PC-9 (cell line): ENCODE measurements at regions of chr19 and their contacts with region 1.

Region 1: GRCh38 chr19:34128558-34129250 is 43.6 kb upstream of the LSM14A start:
- DNase-seq: no peak
- H3K4me3 ChIP-seq: no peak overlapping the region
- H3K27ac ChIP-seq: no peak overlapping the region
- H3K4me1 ChIP-seq: peaks cover 1% of the 10 kb centered on the region; the same call in 1 of the 2 replicates
- H3K27me3 ChIP-seq: peaks cover 28% of the 10 kb centered on the region; the same call in 1 of the 2 replicates
- CTCF ChIP-seq: no peak

Region 2: DNA sequence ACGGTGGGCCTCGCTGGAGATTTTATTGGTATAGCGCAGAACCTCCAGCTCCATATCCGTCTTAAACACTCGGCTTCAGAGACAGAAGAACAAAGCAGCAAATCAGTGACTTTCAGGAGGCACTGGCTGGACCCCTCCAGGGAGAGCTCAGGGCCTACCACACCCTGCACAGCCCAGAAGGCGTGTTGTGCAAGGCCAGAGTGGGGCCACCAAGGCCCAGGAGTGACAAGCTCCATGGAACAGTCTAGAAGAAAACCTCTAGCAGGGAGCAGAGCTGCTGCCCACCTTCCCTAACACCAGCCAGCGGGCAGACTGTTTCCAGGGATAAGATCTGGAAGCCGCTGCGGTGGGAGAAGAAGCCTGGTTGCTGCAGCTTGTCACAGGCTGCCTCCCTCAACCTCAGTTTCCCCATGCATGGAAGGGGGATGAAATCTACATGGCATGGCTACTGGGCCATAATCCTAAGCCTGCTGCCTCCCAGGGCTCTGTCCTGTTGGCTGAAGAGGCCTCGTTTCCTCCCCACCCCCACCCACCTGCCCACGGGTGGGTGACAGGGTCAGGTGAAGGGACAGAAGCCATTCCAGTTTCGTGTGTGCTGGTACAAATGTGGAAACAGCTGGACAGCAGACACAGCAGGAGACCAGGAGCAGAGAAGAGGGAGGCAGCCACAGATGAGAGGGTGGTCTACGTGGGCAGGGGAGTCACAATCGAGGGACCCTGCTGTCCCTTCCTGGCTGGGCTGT is 664.5 kb before region 1 on chr19:
- CTCF ChIA-PET with region 1: interaction called, 10 read pairs
- POLR2A ChIA-PET with region 1: no interaction called
- intact Hi-C with region 1: no loop called
- DNase-seq: no peak
- H3K4me3 ChIP-seq: no peak overlapping the region
- H3K27ac ChIP-seq: no peak overlapping the region
- H3K4me1 ChIP-seq: no peaks in the 10 kb centered on the region
- H3K27me3 ChIP-seq: no peaks in the 10 kb centered on the region
- CTCF ChIP-seq: no peak

Region 3: GRCh38 chr19:34184880-34185491 is 56.3 kb after region 1 on chr19:
- CTCF ChIA-PET with region 1: no interaction called
- POLR2A ChIA-PET with region 1: no interaction called
- intact Hi-C with region 1: no loop called
- DNase-seq: no peak
- H3K4me3 ChIP-seq: no peak overlapping the region
- H3K27ac ChIP-seq: no peak overlapping the region
- H3K4me1 ChIP-seq: peaks cover 29% of the 10 kb centered on the region
- H3K27me3 ChIP-seq: no peaks in the 10 kb centered on the region
- CTCF ChIP-seq: no peak